ENCODE measurements at regions of chr7 and their contacts with region 1.

Region 1: GRCh38 chr7:130982160-130982638 is 248.2 kb upstream of the KLF14 start:
- DNase-seq: no peak
- ATAC-seq: peak in 3 of 4 donors; percentile 43 to 66 (median 58)
- H3K4me3 ChIP-seq: no peak overlapping the region
- H3K27ac ChIP-seq: peak overlapping the region in 2 of 12 donors; percentile 13 to 25
- H3K4me1 ChIP-seq: peaks cover 4 to 73% (median 49%) of the 10 kb centered on the region in 12 donors
- H3K27me3 ChIP-seq: no peaks in the 10 kb centered on the region
- CTCF ChIP-seq: peak; percentile 45 to 72 (median 58)
- POLR2A ChIP-seq: no peak

Region 2: DNA sequence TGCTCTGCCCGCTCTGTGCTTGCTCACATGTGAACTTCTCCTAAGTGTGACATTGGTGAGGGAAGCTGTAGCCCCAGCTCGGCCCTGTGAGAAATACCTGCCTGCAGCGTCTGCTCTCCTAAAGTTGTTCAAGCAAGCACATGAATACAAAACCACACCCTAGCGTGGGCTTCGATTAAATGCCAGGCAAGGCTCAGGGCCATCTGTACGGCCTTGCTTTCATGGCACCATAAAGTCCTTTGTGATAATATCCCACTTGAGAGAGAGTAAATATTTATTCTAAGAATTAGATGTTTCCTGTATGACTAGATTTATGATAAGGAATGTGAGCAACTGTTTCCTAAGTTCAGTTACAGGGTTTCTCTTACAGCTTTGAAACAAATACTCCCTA is 14.6 kb after region 1 on chr7:
- intact Hi-C with region 1: loop called in 1 of 10 experiments (anchors 2 kb)
- DNase-seq: no peak
- ATAC-seq: peak in 3 of 4 donors; percentile 47 to 67 (median 48)
- H3K4me3 ChIP-seq: peak overlapping the region in 1 of 12 donors; percentile 18
- H3K27ac ChIP-seq: peak overlapping the region; percentile 24 to 76 (median 46)
- H3K4me1 ChIP-seq: peaks cover 22 to 89% (median 65%) of the 10 kb centered on the region in 12 donors
- H3K27me3 ChIP-seq: no peaks in the 10 kb centered on the region
- CTCF ChIP-seq: no peak
- POLR2A ChIP-seq: no peak

Region 3: DNA sequence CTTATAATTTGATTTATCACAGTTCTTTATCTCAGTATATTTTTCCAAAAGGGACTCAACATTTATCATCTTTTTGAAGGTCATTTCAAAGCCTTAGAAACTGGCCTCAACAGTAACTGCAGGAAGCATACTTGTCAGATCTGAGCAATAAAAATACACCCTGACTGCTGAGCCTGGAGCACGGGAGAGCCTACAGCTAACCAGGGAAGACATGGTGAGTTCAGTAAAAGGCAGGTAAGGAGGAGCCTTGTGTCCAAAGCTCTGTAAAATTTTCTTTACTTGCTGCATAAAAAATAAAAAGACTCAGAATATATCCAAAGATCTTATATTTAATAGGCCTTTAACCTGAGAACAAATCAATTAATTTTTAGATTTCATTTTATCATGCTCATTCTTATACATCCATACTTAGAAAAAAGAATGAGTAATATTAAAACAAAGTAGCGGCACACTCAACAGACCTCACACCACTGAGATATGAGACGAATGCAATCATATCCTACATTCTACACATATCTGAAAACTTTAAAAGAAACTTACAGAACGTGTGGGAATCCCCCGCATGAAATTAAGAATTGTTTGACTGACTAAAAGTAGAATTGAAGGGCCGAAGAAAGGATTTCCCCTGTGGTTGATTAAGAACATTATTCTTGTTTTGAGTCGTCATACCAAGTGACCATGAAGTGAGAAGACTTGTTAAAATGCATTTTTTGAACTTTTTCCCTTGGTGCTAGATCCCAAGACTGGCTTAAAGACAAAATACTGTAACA is 49.1 kb after region 1 on chr7:
- intact Hi-C with region 1: loop called in 3 of 10 experiments (anchors 5 to 10 kb)
- DNase-seq: no peak
- ATAC-seq: no peak
- H3K4me3 ChIP-seq: no peak overlapping the region
- H3K27ac ChIP-seq: peak overlapping the region in 1 of 12 donors; percentile 18
- H3K4me1 ChIP-seq: peaks cover 0 to 82% (median 51%) of the 10 kb centered on the region in 12 donors
- H3K27me3 ChIP-seq: no peaks in the 10 kb centered on the region
- CTCF ChIP-seq: no peak
- POLR2A ChIP-seq: no peak

Region 4: DNA sequence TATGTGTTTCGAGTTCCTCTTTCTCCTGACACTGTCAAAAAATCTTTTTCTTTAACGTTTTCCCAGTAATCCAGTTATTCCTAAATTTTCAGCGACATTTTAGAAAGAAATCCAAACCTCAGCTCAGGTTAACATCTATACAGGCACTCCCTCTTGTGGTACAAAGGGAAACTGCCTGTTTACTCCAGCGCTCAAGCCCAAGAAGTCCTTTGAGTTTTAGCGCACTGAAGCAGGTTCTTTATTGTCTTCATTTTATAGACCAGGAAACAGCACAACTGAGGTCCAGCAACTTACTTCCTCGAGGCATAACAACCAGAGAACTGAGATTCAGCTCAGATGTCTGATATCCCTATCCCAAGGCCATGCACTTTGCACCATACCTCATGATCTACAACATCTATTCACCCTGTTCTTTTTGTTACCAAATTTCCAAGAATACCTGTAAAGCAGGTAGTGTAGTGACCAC is 58.3 kb after region 1 on chr7:
- intact Hi-C with region 1: loop called in 7 of 10 experiments (anchors 2 to 10 kb)
- DNase-seq: peak in 2 of 5 donors; percentile 53 to 56
- ATAC-seq: peak; percentile 16 to 78 (median 68)
- H3K4me3 ChIP-seq: peak overlapping the region in 1 of 12 donors; percentile 0
- H3K27ac ChIP-seq: peak overlapping the region in 9 of 12 donors; percentile 6 to 72 (median 42)
- H3K4me1 ChIP-seq: peaks cover 8 to 61% (median 37%) of the 10 kb centered on the region in 12 donors
- H3K27me3 ChIP-seq: no peaks in the 10 kb centered on the region
- CTCF ChIP-seq: peak; percentile 82 to 97 (median 90)
- POLR2A ChIP-seq: no peak

Region 5: GRCh38 chr7:131424219-131424822 is 442.1 kb after region 1 on chr7:
- intact Hi-C with region 1: loop called in 1 of 10 experiments (anchors 10 kb)
- DNase-seq: no peak
- ATAC-seq: peak; percentile 41 to 64 (median 58)
- H3K4me3 ChIP-seq: no peak overlapping the region
- H3K27ac ChIP-seq: peak overlapping the region in 1 of 12 donors; percentile 15
- H3K4me1 ChIP-seq: peaks cover 0 to 27% (median 15%) of the 10 kb centered on the region in 12 donors
- H3K27me3 ChIP-seq: no peaks in the 10 kb centered on the region
- CTCF ChIP-seq: peak; percentile 32 to 73 (median 63)
- POLR2A ChIP-seq: no peak